Heart left ventricle (tissue), 16 donors: ENCODE measurements at regions of chr9 and their contacts with region 1.

Region 1: GRCh38 chr9:109244157-109245132 is 76.4 kb downstream of the EPB41L4B start:
- DNase-seq: peak; percentile 42 to 79 (median 58)
- ATAC-seq: peak; percentile 68 to 89 (median 82)
- H3K4me3 ChIP-seq: no peak overlapping the region
- H3K27ac ChIP-seq: peak overlapping the region in 1 of 12 donors; percentile 53
- H3K4me1 ChIP-seq: peaks cover 0 to 17% (median 2%) of the 10 kb centered on the region in 12 donors
- H3K27me3 ChIP-seq: peaks cover 0 to 6% (median 0%) of the 10 kb centered on the region in 9 donors
- CTCF ChIP-seq: peak; percentile 89 to 95 (median 93)
- POLR2A ChIP-seq: no peak

Region 2: GRCh38 chr9:109328978-109329637 is 84.7 kb after region 1 on chr9:
- intact Hi-C with region 1: loop called in 2 of 10 experiments (anchors 5 kb)
- DNase-seq: peak in 2 of 5 donors; percentile 44 to 50
- ATAC-seq: peak in 3 of 4 donors; percentile 58 to 71 (median 60)
- H3K4me3 ChIP-seq: peak overlapping the region in 2 of 12 donors; percentile 4 to 30
- H3K27ac ChIP-seq: peak overlapping the region in 2 of 12 donors; percentile 53 to 54
- H3K4me1 ChIP-seq: peaks cover 0 to 26% (median 4%) of the 10 kb centered on the region in 12 donors
- H3K27me3 ChIP-seq: peaks cover 0 to 6% (median 0%) of the 10 kb centered on the region in 9 donors
- CTCF ChIP-seq: no peak
- POLR2A ChIP-seq: no peak

Region 3: DNA sequence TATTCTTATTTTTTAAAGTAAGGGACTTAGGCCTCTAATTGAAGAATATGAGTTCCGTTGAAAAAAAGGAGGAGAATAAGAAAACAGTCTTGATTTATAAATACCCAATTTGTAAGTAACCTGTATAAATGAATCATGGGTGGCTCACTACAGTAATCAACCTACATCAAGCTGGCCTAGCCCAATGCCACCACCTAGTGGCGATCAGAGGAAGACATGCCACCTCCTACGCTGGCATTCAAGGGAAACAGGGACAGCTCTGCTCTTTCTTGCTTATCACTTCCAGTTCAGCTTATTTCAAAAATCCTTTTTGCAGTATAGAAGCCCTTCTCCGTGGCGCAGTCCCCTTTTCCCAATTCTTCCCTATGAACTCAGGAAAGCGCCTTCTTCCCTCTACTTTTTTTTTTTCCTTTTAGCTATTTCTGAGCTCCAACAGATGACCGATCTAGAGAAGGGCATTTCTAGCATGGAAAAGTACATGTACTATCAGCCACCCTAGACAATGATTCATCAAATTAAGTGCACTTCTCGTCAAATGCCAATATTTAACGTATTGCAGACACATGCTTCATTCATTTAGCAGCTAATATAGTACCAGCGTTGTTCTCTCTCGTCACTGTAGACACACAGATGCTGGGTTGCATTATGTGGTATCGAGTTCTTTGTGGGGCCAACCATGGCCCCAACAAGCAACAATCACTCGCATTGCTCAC is 225.4 kb after region 1 on chr9:
- intact Hi-C with region 1: loop called in 4 of 10 experiments (anchors 5 to 10 kb)
- DNase-seq: peak in 4 of 5 donors; percentile 61 to 66 (median 64)
- ATAC-seq: peak; percentile 79 to 89 (median 84)
- H3K4me3 ChIP-seq: no peak overlapping the region
- H3K27ac ChIP-seq: peak overlapping the region in 8 of 12 donors; percentile 1 to 47 (median 23)
- H3K4me1 ChIP-seq: peaks cover 0 to 33% (median 11%) of the 10 kb centered on the region in 12 donors
- H3K27me3 ChIP-seq: peaks cover 0 to 17% (median 0%) of the 10 kb centered on the region in 9 donors
- CTCF ChIP-seq: peak; percentile 79 to 91 (median 86)
- POLR2A ChIP-seq: no peak

Region 4: GRCh38 chr9:109487247-109487646 is 242.8 kb after region 1 on chr9:
- intact Hi-C with region 1: no loop called
- DNase-seq: no peak
- ATAC-seq: no peak
- H3K4me3 ChIP-seq: no peak overlapping the region
- H3K27ac ChIP-seq: no peak overlapping the region
- H3K4me1 ChIP-seq: peaks cover 0 to 8% (median 0%) of the 10 kb centered on the region in 12 donors
- H3K27me3 ChIP-seq: peaks cover 0 to 4% (median 0%) of the 10 kb centered on the region in 9 donors
- CTCF ChIP-seq: no peak
- POLR2A ChIP-seq: no peak

Region 5: GRCh38 chr9:109520478-109521132 is 276.2 kb after region 1 on chr9:
- intact Hi-C with region 1: loop called in 3 of 10 experiments (anchors 5 to 10 kb)
- DNase-seq: peak in 3 of 5 donors; percentile 36 to 40 (median 39)
- ATAC-seq: peak; percentile 46 to 92 (median 86)
- H3K4me3 ChIP-seq: no peak overlapping the region
- H3K27ac ChIP-seq: no peak overlapping the region
- H3K4me1 ChIP-seq: no peaks in the 10 kb centered on the region
- H3K27me3 ChIP-seq: peaks cover 0 to 2% (median 0%) of the 10 kb centered on the region in 9 donors
- CTCF ChIP-seq: peak; percentile 66 to 89 (median 84)
- POLR2A ChIP-seq: no peak

Region 6: DNA sequence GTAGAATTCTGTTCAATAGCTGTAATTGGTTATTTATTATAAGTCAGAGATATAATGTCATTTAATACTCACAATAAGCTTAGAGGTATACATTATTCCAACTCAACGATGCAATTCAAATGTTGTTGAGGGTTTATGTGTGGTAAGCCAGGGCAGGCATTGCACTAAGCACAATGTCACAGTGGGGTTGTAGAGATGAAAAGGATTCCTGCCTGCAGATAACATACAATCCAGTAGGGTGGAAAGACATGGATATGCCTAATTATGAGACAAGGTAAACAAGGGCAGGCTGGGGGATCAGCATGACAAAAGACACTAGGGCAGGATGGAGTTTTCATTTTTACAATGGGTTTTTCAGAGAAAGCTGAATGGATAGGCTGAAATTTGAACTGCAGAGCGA is 436.9 kb after region 1 on chr9:
- intact Hi-C with region 1: no loop called
- DNase-seq: no peak
- ATAC-seq: no peak
- H3K4me3 ChIP-seq: no peak overlapping the region
- H3K27ac ChIP-seq: no peak overlapping the region
- H3K4me1 ChIP-seq: no peaks in the 10 kb centered on the region
- H3K27me3 ChIP-seq: no peaks in the 10 kb centered on the region
- CTCF ChIP-seq: no peak
- POLR2A ChIP-seq: no peak